Pancreas (tissue), 10 donors: ENCODE measurements at regions of chr22 and their contacts with region 1.

Region 1: DNA sequence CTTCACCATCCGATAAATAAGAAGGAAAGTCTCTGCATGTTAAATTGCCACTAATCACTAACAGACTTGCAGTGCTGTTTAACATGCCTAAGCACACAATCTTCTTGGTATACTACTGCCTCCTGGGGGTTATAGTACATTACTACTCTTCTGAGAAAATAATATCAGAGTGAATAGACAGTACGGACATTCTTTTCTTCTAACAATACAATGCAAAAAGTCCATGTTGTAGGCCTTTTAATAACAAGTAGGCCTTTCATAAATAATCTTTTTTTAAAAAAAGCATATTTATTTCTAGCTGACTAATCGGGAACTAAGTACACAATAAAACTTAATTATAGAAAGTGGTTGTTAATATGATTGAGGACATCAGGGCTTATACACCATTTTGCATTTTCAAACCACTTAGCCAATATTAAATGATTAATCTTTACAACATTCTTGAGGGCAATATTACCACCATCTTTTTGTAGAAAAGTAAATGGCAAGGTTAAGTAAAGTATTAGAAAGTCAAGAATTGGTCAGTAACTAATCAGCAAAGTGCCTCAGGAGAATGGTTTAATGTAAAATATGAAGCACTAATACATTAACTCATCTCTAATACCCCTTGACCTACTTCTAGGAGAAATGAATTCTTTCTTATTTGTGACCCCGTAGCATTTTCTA is 84.7 kb downstream of the TTC28 start:
- DNase-seq: no peak
- ATAC-seq: peak; percentile 83 to 99 (median 97)
- H3K4me3 ChIP-seq: no peak overlapping the region
- H3K27ac ChIP-seq: no peak overlapping the region
- H3K4me1 ChIP-seq: no peaks in the 10 kb centered on the region
- H3K27me3 ChIP-seq: no peaks in the 10 kb centered on the region
- CTCF ChIP-seq: peak; percentile 12 to 62 (median 40)

Region 2: DNA sequence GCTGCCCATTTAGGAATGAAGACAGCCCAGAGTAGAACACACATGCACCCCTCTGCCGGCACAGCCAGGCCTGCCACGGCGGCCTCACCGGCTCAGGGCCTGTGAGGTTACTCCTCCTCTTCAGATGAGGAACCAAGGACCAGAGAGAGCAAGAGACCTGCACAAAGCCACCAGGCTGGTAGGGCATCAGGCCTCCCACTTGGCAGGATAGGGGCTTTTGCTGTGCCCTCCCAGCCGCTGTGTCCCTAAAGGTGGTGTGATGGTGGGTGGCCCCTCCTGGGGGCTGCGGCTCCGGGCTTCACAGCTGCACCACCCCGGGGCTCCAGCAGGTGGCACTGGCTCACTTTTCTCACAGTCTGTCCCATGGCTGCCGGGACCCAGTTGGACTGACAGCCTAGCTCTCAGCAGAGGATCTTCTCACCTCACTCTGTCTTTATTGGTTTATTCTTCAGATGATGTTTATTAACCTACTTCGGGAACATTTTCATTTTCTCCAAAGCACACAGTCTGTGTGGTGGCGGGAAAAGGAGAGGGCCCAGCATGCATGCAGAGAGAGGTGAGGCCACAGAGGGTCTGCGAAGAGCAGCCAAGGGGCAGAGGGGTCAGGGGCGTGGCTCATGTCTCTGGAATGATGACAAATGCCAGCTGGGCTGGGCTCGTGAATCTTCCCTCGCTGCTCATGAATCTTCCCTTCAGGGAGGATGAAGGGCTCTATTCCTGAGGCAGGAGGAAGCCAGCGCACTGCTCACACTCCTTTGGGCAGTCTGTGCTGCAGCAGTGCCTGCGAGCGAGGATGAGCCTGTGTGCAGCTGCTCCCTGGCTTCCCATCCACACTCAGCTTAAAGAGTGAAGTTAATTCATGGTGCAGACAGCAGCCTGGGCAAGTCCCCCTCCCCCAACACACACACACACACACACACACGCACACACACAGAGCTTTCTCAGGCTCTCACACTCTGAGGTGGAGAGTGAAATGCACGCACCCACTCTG is 574.8 kb before region 1 on chr22:
- intact Hi-C with region 1: loop called in 1 of 3 experiments (anchors 10 kb)
- DNase-seq: peak in 5 of 6 donors; percentile 36 to 84 (median 67)
- ATAC-seq: peak; percentile 80 to 94 (median 88)
- H3K4me3 ChIP-seq: no peak overlapping the region
- H3K27ac ChIP-seq: no peak overlapping the region
- H3K4me1 ChIP-seq: no peaks in the 10 kb centered on the region
- H3K27me3 ChIP-seq: no peaks in the 10 kb centered on the region
- CTCF ChIP-seq: peak; percentile 85 to 94 (median 90)

Region 3: GRCh38 chr22:28051787-28052356 is 543.1 kb before region 1 on chr22:
- intact Hi-C with region 1: loop called in 2 of 3 experiments (anchors 5 to 10 kb)
- DNase-seq: peak; percentile 49 to 83 (median 76)
- ATAC-seq: peak; percentile 58 to 87 (median 78)
- H3K4me3 ChIP-seq: no peak overlapping the region
- H3K27ac ChIP-seq: no peak overlapping the region
- H3K4me1 ChIP-seq: no peaks in the 10 kb centered on the region
- H3K27me3 ChIP-seq: no peaks in the 10 kb centered on the region
- CTCF ChIP-seq: peak; percentile 63 to 76 (median 66)

Region 4: GRCh38 chr22:28656181-28656580 is 61.3 kb after region 1 on chr22:
- intact Hi-C with region 1: no loop called
- DNase-seq: no peak
- ATAC-seq: no peak
- H3K4me3 ChIP-seq: no peak overlapping the region
- H3K27ac ChIP-seq: no peak overlapping the region
- H3K4me1 ChIP-seq: peaks cover 0 to 22% (median 15%) of the 10 kb centered on the region in 3 donors
- H3K27me3 ChIP-seq: no peaks in the 10 kb centered on the region
- CTCF ChIP-seq: no peak